ENCODE measurements at regions of chr12 and their contacts with region 1.

Region 1: DNA sequence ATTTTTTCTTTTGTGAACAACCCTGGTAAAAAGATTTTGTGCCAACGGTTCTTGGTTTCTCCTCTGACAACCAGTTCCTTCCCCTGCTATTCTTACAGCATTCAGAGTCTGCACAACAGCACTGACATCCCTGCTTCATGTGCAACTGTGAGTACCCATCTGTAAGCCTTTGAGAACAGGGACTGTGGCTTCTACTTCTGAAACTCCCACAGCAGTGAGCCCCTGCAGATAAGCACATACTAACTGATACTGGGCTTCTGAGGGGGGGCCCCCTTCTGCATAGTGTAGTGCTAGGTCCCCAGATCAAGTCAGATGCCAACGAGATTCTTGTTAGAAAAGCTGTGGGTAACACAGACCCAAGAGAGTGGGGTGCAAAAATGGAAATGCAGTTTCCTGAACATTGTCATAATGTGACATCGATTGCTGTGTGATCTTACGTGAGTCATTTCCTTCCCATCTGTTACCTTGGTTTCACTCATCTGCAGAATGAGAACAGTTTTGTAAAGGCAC is 11.1 kb upstream of the NINJ2 start:
- DNase-seq: peak; percentile 91
- H3K4me3 Mint-ChIP-seq: peak overlapping the region; percentile 16
- H3K27ac Mint-ChIP-seq: peak overlapping the region; percentile 78
- H3K4me1 Mint-ChIP-seq: peaks cover 65% of the 10 kb centered on the region
- H3K27me3 Mint-ChIP-seq: no peaks in the 10 kb centered on the region

Region 2: GRCh38 chr12:622416-622815 is 51.9 kb before region 1 on chr12:
- CTCF ChIA-PET with region 1: no interaction called
- intact Hi-C with region 1: loop called (anchors 1 kb)
- DNase-seq: peak; percentile 57
- H3K4me3 Mint-ChIP-seq: peak overlapping the region; percentile 10
- H3K27ac Mint-ChIP-seq: peak overlapping the region; percentile 81
- H3K4me1 Mint-ChIP-seq: peaks cover 43% of the 10 kb centered on the region
- H3K27me3 Mint-ChIP-seq: no peaks in the 10 kb centered on the region

Region 3: DNA sequence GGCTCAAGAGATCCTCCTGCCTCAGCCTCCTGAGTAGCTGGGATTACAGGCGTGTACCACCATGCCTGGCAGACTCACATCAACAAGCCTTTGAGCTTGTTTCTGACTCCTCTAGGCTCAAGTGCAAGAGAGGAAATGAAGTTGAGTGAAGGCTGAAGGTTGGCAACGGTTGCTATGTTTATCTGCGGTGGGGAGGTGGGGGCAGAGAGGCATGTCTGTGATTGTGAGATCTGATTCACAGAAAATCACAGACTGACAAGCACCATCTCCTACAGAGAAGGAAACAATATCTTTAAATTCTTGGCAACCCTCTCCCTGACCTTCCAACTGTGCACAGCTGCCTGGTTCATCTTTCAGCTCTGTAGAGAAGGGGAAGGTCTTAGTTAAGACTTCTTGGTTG is 11.1 kb after region 1 on chr12:
- CTCF ChIA-PET with region 1: interaction called, 5 read pairs
- intact Hi-C with region 1: loop called (anchors 1 kb)
- DNase-seq: peak; percentile 94
- H3K4me3 Mint-ChIP-seq: peak overlapping the region; percentile 36
- H3K27ac Mint-ChIP-seq: peak overlapping the region; percentile 82
- H3K4me1 Mint-ChIP-seq: peaks cover 36% of the 10 kb centered on the region
- H3K27me3 Mint-ChIP-seq: no peaks in the 10 kb centered on the region

Region 4: GRCh38 chr12:724194-724855 is 50.0 kb after region 1 on chr12:
- CTCF ChIA-PET with region 1: interaction called, 5 read pairs
- intact Hi-C with region 1: loop called (anchors 1 kb)
- DNase-seq: peak; percentile 54
- H3K4me3 Mint-ChIP-seq: peak overlapping the region; percentile 14
- H3K27ac Mint-ChIP-seq: peak overlapping the region; percentile 80
- H3K4me1 Mint-ChIP-seq: peaks cover 83% of the 10 kb centered on the region
- H3K27me3 Mint-ChIP-seq: no peaks in the 10 kb centered on the region

Region 5: DNA sequence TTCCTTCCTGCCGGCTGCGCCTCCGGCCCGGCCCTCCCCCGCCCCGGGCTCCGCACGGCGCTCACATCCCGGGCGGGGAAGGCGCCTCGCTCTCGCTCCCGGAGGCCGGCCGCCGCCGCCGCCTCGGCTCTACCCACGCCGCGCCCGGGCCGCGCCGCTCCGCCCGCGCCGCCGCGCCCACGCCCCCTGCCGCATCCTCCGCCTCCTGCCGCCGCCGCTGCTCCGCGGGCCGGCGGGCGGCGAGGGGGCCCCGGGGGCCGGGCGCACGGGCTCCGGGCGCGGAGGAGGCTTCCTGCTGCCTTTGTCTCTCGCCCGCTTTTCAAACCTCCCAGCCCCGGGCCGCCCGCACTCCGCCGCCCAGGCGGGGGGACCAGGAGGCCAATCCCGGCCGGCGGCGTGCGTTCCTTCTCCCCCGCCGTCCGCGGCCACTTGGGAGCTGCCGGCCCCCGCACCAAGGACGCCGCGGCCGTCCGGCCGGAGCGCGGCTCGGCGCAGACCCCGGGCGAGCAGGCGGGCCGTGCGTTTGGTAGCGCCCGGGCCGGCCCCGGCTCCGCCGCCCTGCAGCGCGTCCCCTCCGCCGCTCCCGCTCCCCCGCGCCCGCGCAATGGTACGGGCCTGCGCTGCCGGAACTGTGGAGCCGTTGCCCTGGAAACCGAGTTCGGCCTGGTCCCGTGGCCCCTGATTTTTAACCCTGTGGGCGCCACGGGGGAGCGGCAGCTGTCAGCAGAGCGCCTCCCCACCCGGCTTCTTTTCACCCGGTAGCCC is 920.1 kb after region 1 on chr12 and contains the start of gene FBXL14:
- CTCF ChIA-PET with region 1: no interaction called
- intact Hi-C with region 1: loop called (anchors 2 kb)
- DNase-seq: peak; percentile 88
- H3K4me3 Mint-ChIP-seq: peak within 1 kb of the TSS; percentile 94
- H3K27ac Mint-ChIP-seq: peak within 1 kb of the TSS; percentile 88
- H3K4me1 Mint-ChIP-seq: peaks cover 39% of the 10 kb centered on the region
- H3K27me3 Mint-ChIP-seq: no peaks in the 10 kb centered on the region
- total RNA-seq, gene FBXL14: 11.4 to 11.9 TPM

Measured in activated naive CD4-positive, alpha-beta T cell treated with anti-CD3 and anti-CD28 coated beads for 36 hours (primary cell).